B cell (primary cell): ENCODE measurements at regions of chr11 and their contacts with region 1.

Region 1: DNA sequence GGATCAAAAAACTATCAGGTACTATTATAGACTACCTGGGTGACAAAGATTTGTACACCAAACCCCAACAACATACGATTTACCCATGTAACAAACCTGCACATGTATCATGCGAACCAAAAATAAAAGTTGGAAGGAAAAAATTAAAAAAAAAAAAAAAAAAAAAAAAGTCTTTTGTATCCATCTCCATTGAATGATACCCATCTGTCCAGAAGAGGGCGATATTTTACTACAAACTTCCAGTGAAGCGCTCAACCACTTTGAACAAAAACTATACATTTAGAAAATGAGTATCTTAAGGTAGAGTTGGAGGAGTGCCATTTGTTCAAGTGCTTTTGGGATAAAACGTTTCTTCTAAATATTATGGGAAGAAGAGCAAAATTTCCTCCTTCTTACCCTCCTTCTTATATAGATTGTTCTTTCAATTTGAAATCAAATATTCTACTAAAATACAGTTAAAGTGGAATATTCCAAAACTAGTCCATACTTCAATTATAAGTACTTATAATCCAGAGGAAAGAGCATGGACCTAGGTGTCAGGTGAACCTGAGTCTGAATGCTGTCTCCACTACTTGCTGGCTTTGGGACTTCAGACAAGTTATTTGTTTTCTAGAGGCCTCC is 23.3 kb downstream of the ARL14EP start:
- DNase-seq: peak; percentile 68
- ATAC-seq: no peak
- H3K4me3 ChIP-seq: no peak overlapping the region
- H3K4me3 Mint-ChIP-seq: no peak overlapping the region
- H3K27ac ChIP-seq: no peak overlapping the region
- H3K27ac Mint-ChIP-seq: no peak overlapping the region
- H3K4me1 ChIP-seq: peaks cover 25 to 34% of the 10 kb centered on the region in 2 donors
- H3K4me1 Mint-ChIP-seq: peaks cover 40% of the 10 kb centered on the region
- H3K27me3 ChIP-seq: no peaks in the 10 kb centered on the region
- H3K27me3 Mint-ChIP-seq: no peaks in the 10 kb centered on the region
- CTCF ChIP-seq: peak; percentile 80

Region 2: GRCh38 chr11:30322826-30323710 is 23.1 kb before region 1 on chr11 and contains the start of gene ARL14EP:
- CTCF ChIA-PET with region 1: interaction called, 28 read pairs
- POLR2A ChIA-PET with region 1: interaction called, 3 read pairs
- intact Hi-C with region 1: loop called (anchors 1 kb)
- DNase-seq: peak; percentile 92
- ATAC-seq: peak; percentile 94
- H3K4me3 ChIP-seq: peak within 1 kb of the TSS; percentile 64 to 84 (median 74)
- H3K4me3 Mint-ChIP-seq: peak within 1 kb of the TSS; percentile 100
- H3K27ac ChIP-seq: peak within 1 kb of the TSS; percentile 91 to 99
- H3K27ac Mint-ChIP-seq: peak within 1 kb of the TSS; percentile 100
- H3K4me1 ChIP-seq: peaks cover 31 to 44% of the 10 kb centered on the region in 2 donors
- H3K4me1 Mint-ChIP-seq: peaks cover 41% of the 10 kb centered on the region
- H3K27me3 ChIP-seq: peaks cover 0 to 3% (median 1%) of the 10 kb centered on the region in 4 experiments
- H3K27me3 Mint-ChIP-seq: peaks cover 16% of the 10 kb centered on the region
- CTCF ChIP-seq: no peak
- total RNA-seq, gene ARL14EP: 43.7 and 47.3 TPM in 2 replicates

Region 3: DNA sequence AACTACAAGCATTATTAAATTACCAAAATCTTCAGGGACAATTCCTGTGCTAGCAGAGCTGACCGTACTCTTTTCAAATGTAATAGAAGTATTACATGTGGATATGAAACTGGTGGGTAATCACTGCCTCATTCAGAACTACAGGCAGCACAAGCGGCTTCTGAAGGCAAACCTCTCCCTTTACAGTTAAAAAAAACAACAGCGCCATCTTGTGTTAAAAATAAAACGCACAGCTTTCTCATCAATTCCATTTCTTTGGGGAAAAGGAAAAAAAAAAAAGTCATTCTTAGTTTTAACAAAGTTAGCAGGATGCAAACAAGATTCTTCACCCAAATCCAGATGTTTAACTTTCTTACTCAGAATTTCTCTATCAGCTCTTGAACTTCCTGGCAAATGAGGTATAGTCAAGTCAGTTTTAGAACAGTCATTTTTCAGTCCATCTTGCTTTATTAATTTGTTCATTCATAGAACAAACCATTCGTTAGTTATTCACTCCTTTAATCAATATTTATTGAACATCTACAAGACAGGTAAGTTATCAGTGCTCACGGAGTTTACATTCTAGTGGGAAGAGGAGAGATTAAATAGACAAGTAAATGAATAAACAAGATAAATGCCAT is 571.8 kb after region 1 on chr11:
- CTCF ChIA-PET with region 1: interaction called, 5 read pairs
- POLR2A ChIA-PET with region 1: no interaction called
- intact Hi-C with region 1: loop called (anchors 1 kb)
- DNase-seq: peak; percentile 42
- ATAC-seq: no peak
- H3K4me3 ChIP-seq: no peak overlapping the region
- H3K4me3 Mint-ChIP-seq: no peak overlapping the region
- H3K27ac ChIP-seq: no peak overlapping the region
- H3K27ac Mint-ChIP-seq: no peak overlapping the region
- H3K4me1 ChIP-seq: no peaks in the 10 kb centered on the region
- H3K4me1 Mint-ChIP-seq: no peaks in the 10 kb centered on the region
- H3K27me3 ChIP-seq: peaks cover 0 to 7% (median 0%) of the 10 kb centered on the region in 4 experiments
- H3K27me3 Mint-ChIP-seq: peaks cover 17% of the 10 kb centered on the region
- CTCF ChIP-seq: peak; percentile 83

Region 4: DNA sequence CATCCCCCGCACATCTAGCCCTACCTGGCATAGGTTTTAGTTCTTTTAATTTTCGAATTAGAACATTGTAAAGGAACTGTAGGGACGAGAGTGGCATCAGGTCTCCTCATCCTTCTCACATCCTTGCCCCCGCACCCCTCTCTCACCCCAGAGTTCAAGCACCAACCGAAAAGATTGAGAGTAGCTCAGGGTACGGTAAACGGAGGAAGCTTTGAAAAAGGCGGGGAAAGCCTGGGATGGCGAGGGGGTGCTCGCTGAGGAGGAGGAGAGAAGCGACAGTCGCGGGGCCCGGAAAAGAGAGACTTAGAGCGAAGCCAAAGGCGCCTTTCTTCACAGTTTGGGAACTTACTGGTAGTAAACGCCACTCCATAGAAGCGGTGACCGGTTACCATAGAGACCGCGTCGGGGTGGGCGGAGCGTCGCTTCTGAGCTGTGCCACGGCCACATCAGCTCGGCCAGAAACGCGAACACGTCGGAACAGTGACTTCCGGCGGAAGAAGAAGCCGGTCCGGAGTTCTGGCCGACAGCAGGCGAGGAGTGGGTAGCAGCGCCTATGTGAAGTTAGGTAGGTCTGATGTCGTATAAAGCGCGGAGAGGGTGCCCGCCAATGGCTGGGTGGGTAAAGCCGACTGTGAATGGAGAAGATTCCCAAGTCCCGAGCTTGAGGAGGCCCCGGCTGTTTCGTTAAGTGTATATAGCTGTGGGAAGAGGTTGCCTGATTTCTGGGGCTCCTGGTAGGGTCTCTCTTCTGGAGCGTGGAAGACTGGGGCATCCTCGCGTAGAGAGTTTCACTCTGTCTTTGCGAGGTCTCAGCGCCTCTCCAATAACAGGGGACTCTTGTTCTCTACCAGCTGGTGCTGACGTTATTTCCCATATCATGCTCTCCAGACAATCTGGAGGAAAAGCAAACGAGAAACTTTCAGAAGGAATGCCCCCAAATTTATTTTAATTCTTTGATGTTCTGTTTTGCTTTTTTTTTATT is 1023.5 kb after region 1 on chr11 and contains the starts of genes DCDC1 and DNAJC24:
- CTCF ChIA-PET with region 1: no interaction called
- POLR2A ChIA-PET with region 1: no interaction called
- intact Hi-C with region 1: loop called (anchors 5 kb)
- DNase-seq: peak; percentile 95
- ATAC-seq: peak; percentile 96
- H3K4me3 ChIP-seq: peak within 1 kb of the TSS; percentile 67 to 91 (median 82)
- H3K4me3 Mint-ChIP-seq: peak within 1 kb of the TSS; percentile 95
- H3K27ac ChIP-seq: peak within 1 kb of the TSS; percentile 67 to 89
- H3K27ac Mint-ChIP-seq: peak within 1 kb of the TSS; percentile 96
- H3K4me1 ChIP-seq: peaks cover 10% of the 10 kb centered on the region in 2 donors
- H3K4me1 Mint-ChIP-seq: peaks cover 31% of the 10 kb centered on the region
- H3K27me3 ChIP-seq: peaks cover 0 to 8% (median 0%) of the 10 kb centered on the region in 4 experiments
- H3K27me3 Mint-ChIP-seq: peaks cover 8% of the 10 kb centered on the region
- CTCF ChIP-seq: no peak
- total RNA-seq, gene DCDC1: not detected in 2 replicates
- total RNA-seq, gene DNAJC24: 24.6 and 31.3 TPM in 2 replicates

Region 5: DNA sequence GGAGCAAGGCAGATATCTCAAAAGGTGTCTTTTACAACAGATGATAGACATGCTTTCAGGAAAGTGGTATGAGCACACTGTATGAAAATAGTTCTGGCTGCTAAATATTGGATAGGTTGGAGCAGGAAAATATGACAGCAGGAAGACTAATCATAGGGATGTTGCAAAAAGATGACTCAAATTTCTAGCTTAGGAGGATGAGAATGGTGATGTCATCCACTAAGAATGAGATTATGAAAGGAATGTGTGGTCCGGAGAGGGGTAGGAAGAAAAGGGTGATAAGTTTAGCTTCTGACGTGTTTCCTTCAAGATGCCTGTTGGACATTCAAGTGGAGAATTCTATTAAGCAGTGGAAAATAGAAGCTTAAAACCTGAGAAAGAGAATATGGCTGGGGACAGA is 1791.1 kb after region 1 on chr11:
- CTCF ChIA-PET with region 1: no interaction called
- POLR2A ChIA-PET with region 1: no interaction called
- intact Hi-C with region 1: no loop called
- DNase-seq: no peak
- ATAC-seq: no peak
- H3K4me3 ChIP-seq: no peak overlapping the region
- H3K4me3 Mint-ChIP-seq: no peak overlapping the region
- H3K27ac ChIP-seq: no peak overlapping the region
- H3K27ac Mint-ChIP-seq: no peak overlapping the region
- H3K4me1 ChIP-seq: no peaks in the 10 kb centered on the region
- H3K4me1 Mint-ChIP-seq: no peaks in the 10 kb centered on the region
- H3K27me3 ChIP-seq: no peaks in the 10 kb centered on the region
- H3K27me3 Mint-ChIP-seq: peaks cover 4% of the 10 kb centered on the region
- CTCF ChIP-seq: no peak